ENCODE measurements at regions of chr7 and their contacts with region 1.

Region 1: GRCh38 chr7:38215735-38216670 is 38.0 kb downstream of the STARD3NL start:
- DNase-seq: peak; percentile 36
- ATAC-seq: peak; percentile 99
- H3K4me3 ChIP-seq: no peak overlapping the region
- H3K27ac ChIP-seq: peak overlapping the region; percentile 14; the same call in 1 of the 2 replicates
- H3K4me1 ChIP-seq: no peaks in the 10 kb centered on the region
- H3K27me3 ChIP-seq: no peaks in the 10 kb centered on the region
- CTCF ChIP-seq: peak; percentile 94 to 99 (median 98)
- EP300 ChIP-seq: no peak
- POLR2A ChIP-seq: no peak
- RAD21 ChIP-seq: peak; percentile 84

Region 2: DNA sequence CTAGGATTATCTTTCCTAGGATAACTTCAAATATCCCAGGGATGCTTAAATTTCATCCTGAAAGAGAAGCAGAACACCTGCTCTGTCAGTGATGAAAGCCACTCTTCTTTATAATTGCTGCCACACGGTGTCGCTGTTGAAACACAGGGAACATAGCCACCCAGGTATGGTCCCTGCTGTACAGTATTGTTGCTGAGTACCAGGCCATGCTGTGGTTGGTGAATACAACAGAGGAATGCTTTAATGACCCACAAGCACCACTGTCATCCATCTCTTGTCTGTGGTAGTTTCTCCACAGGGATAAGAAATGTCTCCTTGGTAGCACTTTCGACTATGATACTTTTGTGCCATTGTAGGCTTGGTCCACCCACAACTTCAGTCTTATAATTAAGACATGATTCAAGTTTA is 108.5 kb before region 1 on chr7:
- CTCF ChIA-PET with region 1: interaction called, 333 read pairs
- POLR2A ChIA-PET with region 1: interaction called, 7 read pairs
- RAD21 ChIA-PET with region 1: interaction called, 159 read pairs
- SMC1A ChIA-PET with region 1: interaction called, 211 read pairs
- in situ Hi-C with region 1: loop called (anchors 5 kb)
- intact Hi-C with region 1: loop called (anchors 2 kb)
- DNase-seq: peak; percentile 44
- ATAC-seq: peak; percentile 97
- H3K4me3 ChIP-seq: no peak overlapping the region
- H3K27ac ChIP-seq: no peak overlapping the region
- H3K4me1 ChIP-seq: no peaks in the 10 kb centered on the region; the same call in 1 of the 2 replicates
- H3K27me3 ChIP-seq: no peaks in the 10 kb centered on the region
- CTCF ChIP-seq: peak; percentile 76 to 93 (median 81)
- EP300 ChIP-seq: no peak
- POLR2A ChIP-seq: no peak
- RAD21 ChIP-seq: peak; percentile 99

Region 3: DNA sequence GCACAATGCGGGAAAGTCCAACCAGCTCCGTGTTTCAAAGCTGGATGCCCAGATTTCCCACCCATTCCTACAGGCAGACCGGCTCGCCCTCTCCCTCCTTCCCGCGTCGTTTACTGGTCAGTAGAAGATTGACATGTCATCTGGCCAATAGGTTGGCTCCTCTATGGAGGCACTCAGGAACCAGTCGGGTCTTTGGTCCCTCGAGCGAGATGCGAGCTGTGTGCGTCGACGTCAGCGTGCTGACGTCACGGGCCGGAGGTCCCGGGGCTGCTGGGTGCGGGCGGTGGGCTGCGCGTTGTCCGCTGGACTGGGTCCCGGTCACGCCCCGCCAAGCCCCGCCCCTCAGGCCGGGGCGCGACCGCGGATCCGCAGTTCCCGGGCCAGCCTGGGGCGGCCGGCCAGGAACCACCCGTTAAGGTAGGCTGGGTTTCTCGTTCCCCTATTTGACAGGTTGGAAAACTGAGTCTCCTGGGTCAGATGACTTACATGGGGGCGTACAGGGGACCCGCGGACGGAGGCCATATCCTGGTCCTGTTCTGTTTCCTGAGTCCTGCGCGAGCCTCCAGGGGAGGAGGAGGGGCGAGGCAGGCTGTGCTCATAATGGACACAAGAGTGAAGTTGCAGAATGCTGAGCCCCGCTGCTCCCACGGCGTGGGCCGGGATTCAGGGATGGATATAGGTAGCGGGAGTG is 37.9 kb before region 1 on chr7 and contains the start of gene STARD3NL:
- CTCF ChIA-PET with region 1: interaction called, 54 read pairs
- POLR2A ChIA-PET with region 1: no interaction called
- RAD21 ChIA-PET with region 1: interaction called, 38 read pairs
- SMC1A ChIA-PET with region 1: interaction called, 40 read pairs
- in situ Hi-C with region 1: no loop called
- intact Hi-C with region 1: loop called (anchors 5 kb)
- DNase-seq: peak; percentile 100
- ATAC-seq: peak; percentile 94
- H3K4me3 ChIP-seq: peak within 1 kb of the TSS; percentile 91
- H3K27ac ChIP-seq: peak within 1 kb of the TSS; percentile 90
- H3K4me1 ChIP-seq: no peaks in the 10 kb centered on the region
- H3K27me3 ChIP-seq: no peaks in the 10 kb centered on the region
- CTCF ChIP-seq: no peak
- EP300 ChIP-seq: no peak
- POLR2A ChIP-seq: peak; percentile 78
- RAD21 ChIP-seq: no peak
- polyA plus RNA-seq, gene STARD3NL: 76.4 to 101 TPM

Region 4: DNA sequence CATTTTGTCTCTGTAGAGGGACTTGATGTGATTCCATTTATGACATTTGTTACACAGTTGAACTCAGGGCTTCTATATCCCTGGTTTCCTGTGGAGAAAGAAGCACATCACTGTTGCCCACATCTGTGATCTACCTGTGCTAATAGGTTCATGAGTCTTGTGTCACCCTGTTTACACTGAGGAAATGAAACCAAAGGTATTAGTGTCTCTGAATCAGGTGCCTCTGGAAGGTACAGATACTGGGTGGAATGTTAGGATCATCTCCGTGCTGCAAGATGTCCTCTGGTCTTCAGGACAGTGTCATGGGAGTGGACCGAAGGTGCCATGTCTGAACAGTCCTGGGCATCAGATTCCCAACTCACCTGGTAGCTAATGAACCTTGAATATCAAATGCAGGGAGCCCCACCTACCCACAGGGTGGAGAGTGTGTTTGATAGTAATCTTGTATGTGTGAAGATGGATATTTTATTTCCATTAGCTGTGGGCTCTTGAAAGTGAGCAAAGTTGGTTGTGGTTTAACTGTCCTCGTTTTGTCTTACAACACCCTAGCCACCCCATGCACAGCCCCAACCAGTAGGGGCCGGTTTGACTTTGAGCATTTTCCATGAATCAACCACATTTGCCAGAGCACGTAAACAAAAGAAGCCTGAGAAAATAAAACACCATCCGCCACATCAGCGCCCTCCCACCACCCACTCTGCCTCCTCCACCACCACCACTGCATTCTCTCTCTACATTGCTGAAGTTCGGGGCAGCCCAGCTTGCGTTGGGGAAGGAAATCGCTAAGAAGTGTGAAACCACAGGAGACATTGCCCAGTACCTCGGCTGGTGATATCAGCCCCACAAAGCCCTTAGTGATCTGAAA is 16.7 kb after region 1 on chr7:
- CTCF ChIA-PET with region 1: interaction called, 25 read pairs
- POLR2A ChIA-PET with region 1: no interaction called
- RAD21 ChIA-PET with region 1: interaction called, 8 read pairs
- SMC1A ChIA-PET with region 1: interaction called, 20 read pairs
- in situ Hi-C with region 1: no loop called
- intact Hi-C with region 1: no loop called
- DNase-seq: peak; percentile 82
- ATAC-seq: peak; percentile 96
- H3K4me3 ChIP-seq: no peak overlapping the region
- H3K27ac ChIP-seq: 0 out of 2 replicates have a peak overlapping the region, but pooled peaks have one; percentile 34
- H3K4me1 ChIP-seq: peaks cover 14% of the 10 kb centered on the region
- H3K27me3 ChIP-seq: no peaks in the 10 kb centered on the region
- CTCF ChIP-seq: peak in 1 of 3 experiments; percentile 17; a peak in 1 of 6 replicates
- EP300 ChIP-seq: peak in 1 of 2 experiments; percentile 82
- POLR2A ChIP-seq: no peak
- RAD21 ChIP-seq: no peak

Region 5: DNA sequence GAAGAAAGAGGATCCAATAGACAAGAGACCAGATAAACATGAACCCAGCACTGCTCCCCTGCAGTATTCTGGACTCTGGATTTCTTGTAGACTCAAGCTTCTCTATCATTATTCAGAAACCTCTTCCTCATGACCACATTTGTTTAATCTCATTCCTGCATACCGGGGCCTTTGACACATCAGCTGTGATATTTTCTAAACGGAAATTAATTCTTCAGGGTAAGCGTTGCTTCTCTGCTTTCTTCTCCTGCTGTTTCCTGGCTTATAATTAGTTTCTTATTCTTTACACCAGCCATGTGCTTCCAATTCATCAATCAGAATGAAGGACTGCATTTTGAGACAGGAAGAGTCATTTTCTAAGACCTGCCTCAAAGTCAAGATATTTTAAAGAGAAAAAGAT is 111.6 kb after region 1 on chr7:
- CTCF ChIA-PET with region 1: interaction called, 430 read pairs
- POLR2A ChIA-PET with region 1: no interaction called
- RAD21 ChIA-PET with region 1: interaction called, 229 read pairs
- SMC1A ChIA-PET with region 1: interaction called, 289 read pairs
- in situ Hi-C with region 1: loop called (anchors 25 kb)
- intact Hi-C with region 1: no loop called
- DNase-seq: no peak
- ATAC-seq: no peak
- H3K4me3 ChIP-seq: no peak overlapping the region
- H3K27ac ChIP-seq: no peak overlapping the region
- H3K4me1 ChIP-seq: no peaks in the 10 kb centered on the region
- H3K27me3 ChIP-seq: no peaks in the 10 kb centered on the region
- CTCF ChIP-seq: no peak
- EP300 ChIP-seq: no peak
- POLR2A ChIP-seq: no peak
- RAD21 ChIP-seq: no peak

Region 6: DNA sequence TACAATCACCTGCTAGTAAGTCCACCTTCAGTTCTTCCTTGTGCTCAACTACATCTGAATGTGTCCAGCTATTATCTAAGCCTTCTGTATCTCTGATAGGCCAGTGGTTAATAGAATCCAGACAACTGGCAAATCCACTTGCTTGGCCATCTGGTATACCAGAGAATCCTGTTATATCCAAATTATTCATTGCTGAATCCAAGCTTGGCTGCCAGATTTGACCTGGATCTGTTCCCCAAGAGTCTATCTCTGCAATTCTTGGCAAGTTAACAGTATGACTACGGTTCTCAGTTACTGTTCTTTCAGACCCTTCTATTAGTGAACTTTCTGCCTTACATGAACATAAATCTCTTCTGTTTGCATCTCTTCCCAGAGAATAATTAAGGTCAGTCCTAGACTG is 212.0 kb after region 1 on chr7:
- CTCF ChIA-PET with region 1: no interaction called
- POLR2A ChIA-PET with region 1: no interaction called
- RAD21 ChIA-PET with region 1: no interaction called
- SMC1A ChIA-PET with region 1: no interaction called
- in situ Hi-C with region 1: no loop called
- intact Hi-C with region 1: no loop called
- DNase-seq: no peak
- ATAC-seq: no peak
- H3K4me3 ChIP-seq: no peak overlapping the region
- H3K27ac ChIP-seq: no peak overlapping the region
- H3K4me1 ChIP-seq: no peaks in the 10 kb centered on the region
- H3K27me3 ChIP-seq: no peaks in the 10 kb centered on the region
- CTCF ChIP-seq: no peak
- EP300 ChIP-seq: no peak
- POLR2A ChIP-seq: no peak
- RAD21 ChIP-seq: no peak